Ascending aorta (tissue), 2 donors: ENCODE measurements at regions of chr2 and their contacts with region 1.

Region 1: DNA sequence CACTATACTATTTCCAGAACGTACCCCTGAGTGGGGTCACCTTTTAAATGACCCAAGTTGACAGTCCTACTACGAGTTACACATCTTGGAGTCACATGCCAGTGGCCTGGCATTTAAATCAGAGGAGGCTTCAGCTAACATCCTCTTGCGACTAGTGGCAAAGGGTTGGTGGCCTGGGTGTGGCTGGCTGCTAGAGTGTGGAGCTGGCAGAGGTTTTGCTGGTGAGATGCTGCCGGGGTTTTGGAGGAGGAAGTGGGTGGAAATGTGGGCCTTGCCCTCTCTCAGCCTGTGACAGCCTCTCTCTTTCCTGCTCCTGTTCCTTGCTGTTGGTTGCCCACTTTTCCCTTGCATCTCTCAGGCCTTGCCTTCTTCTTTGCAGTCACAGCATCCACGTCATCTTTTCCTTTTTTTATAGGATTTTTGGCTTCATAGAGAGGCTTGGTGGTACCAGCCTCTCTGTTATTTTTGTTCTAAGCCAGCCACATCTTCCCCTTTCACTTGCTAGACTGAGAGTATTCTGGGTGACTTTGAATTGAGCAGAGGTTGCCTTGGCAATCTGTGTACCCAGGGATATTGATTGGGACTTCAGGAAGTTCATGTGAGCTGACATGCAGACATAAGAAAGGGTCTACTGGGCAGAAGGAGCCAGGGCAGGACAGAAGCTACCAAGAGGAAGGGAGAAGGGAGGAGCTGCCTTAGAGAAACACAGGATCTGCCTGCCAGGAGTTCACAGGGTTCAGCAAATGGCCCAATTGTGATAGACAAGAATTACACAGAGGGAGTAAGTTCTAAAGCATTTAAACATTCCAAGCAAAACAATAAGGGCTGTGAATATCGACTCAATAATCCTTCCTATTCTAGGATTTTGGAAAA is 55.4 kb downstream of the CDC42EP3 start:
- DNase-seq: peak; percentile 34 to 70
- H3K4me3 ChIP-seq: no peak overlapping the region
- H3K27ac ChIP-seq: peak overlapping the region; percentile 70 to 78
- H3K4me1 ChIP-seq: peaks cover 16 to 45% of the 10 kb centered on the region in 2 donors
- H3K27me3 ChIP-seq: no peaks in the 10 kb centered on the region
- CTCF ChIP-seq: no peak

Region 2: GRCh38 chr2:37582481-37583220 is 33.4 kb before region 1 on chr2:
- intact Hi-C with region 1: loop called (anchors 5 kb)
- DNase-seq: no peak
- H3K4me3 ChIP-seq: peak overlapping the region in 1 of 2 donors; percentile 40
- H3K27ac ChIP-seq: peak overlapping the region; percentile 8 to 64
- H3K4me1 ChIP-seq: peaks cover 18 to 37% of the 10 kb centered on the region in 2 donors
- H3K27me3 ChIP-seq: no peaks in the 10 kb centered on the region
- CTCF ChIP-seq: no peak

Region 3: GRCh38 chr2:37916512-37917082 is 300.6 kb after region 1 on chr2:
- intact Hi-C with region 1: no loop called
- DNase-seq: peak in 1 of 2 donors; percentile 72
- H3K4me3 ChIP-seq: no peak overlapping the region
- H3K27ac ChIP-seq: no peak overlapping the region
- H3K4me1 ChIP-seq: peaks cover 0 to 9% of the 10 kb centered on the region in 2 donors
- H3K27me3 ChIP-seq: no peaks in the 10 kb centered on the region
- CTCF ChIP-seq: no peak